WTC11 (cell line): ENCODE measurements at regions of chr6 and their contacts with region 1.

Region 1: GRCh38 chr6:4957521-4958231 is 46.2 kb downstream of the RPP40 start:
- DNase-seq: peak; percentile 46
- ATAC-seq: peak; percentile 90
- H3K4me3 Mint-ChIP-seq: no peak overlapping the region
- H3K27ac Mint-ChIP-seq: peak overlapping the region; percentile 87
- H3K4me1 Mint-ChIP-seq: peaks cover 23% of the 10 kb centered on the region
- H3K27me3 Mint-ChIP-seq: no peaks in the 10 kb centered on the region
- CTCF ChIP-seq: 0 out of 2 replicates have a peak, but pooled peaks have one; percentile 27

Region 2: GRCh38 chr6:4973982-4974745 is 16.5 kb after region 1 on chr6:
- CTCF ChIA-PET with region 1: interaction called, 15 read pairs
- POLR2A ChIA-PET with region 1: no interaction called
- DNase-seq: peak; percentile 74
- ATAC-seq: peak; percentile 98
- H3K4me3 Mint-ChIP-seq: no peak overlapping the region; the same call in 1 of the 2 replicates
- H3K27ac Mint-ChIP-seq: peak overlapping the region; percentile 82
- H3K4me1 Mint-ChIP-seq: peaks cover 23% of the 10 kb centered on the region
- H3K27me3 Mint-ChIP-seq: no peaks in the 10 kb centered on the region; the same call in 1 of the 2 replicates
- CTCF ChIP-seq: no peak

Region 3: GRCh38 chr6:5030596-5031136 is 73.0 kb after region 1 on chr6:
- CTCF ChIA-PET with region 1: interaction called, 18 read pairs
- POLR2A ChIA-PET with region 1: no interaction called
- DNase-seq: peak; percentile 93
- ATAC-seq: peak; percentile 73
- H3K4me3 Mint-ChIP-seq: no peak overlapping the region
- H3K27ac Mint-ChIP-seq: no peak overlapping the region
- H3K4me1 Mint-ChIP-seq: peaks cover 46% of the 10 kb centered on the region
- H3K27me3 Mint-ChIP-seq: peaks cover 7% of the 10 kb centered on the region
- CTCF ChIP-seq: peak; percentile 72